Prostate gland (tissue), 2 donors: ENCODE measurements at regions of chr5 and their contacts with region 1.

Region 1: GRCh38 chr5:170434966-170435605 is 45.9 kb upstream of the KCNMB1 start:
- DNase-seq: peak; percentile 37
- H3K4me3 ChIP-seq: no peak overlapping the region
- H3K27ac ChIP-seq: no peak overlapping the region
- H3K4me1 ChIP-seq: no peaks in the 10 kb centered on the region
- H3K27me3 ChIP-seq: no peaks in the 10 kb centered on the region
- CTCF ChIP-seq: peak; percentile 94 to 95 (median 94)
- POLR2A ChIP-seq: no peak

Region 2: DNA sequence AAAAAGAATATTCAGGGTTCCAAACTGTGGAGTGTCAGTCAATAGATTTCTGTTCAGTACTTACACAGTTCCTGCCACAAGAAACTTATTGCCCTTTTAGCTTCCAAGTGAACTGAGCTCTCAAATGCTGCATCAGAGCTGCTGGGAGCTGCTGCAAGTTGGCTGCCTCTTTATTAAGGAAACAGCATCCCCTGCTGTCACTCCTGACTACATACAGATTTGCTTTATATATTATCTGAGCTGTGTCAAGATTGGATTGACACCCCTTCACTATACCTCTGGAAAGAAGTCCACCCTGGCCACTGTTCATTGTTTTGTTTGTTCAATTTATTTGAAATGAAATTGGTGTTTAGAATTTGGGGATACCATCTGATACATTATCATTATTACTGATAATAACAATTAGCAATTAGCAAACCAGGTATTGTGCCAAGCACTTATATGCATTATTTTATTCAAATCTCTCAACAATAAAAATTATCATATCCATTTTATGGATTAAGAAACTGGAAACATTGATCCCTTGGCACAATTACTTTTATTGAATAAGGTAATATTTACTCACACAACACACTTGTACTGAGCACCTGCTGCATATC is 218.7 kb before region 1 on chr5:
- intact Hi-C with region 1: no loop called
- DNase-seq: no peak
- H3K4me3 ChIP-seq: no peak overlapping the region
- H3K27ac ChIP-seq: no peak overlapping the region
- H3K4me1 ChIP-seq: no peaks in the 10 kb centered on the region
- H3K27me3 ChIP-seq: no peaks in the 10 kb centered on the region
- CTCF ChIP-seq: peak in 2 of 4 experiments; percentile 45 to 48
- POLR2A ChIP-seq: no peak

Region 3: GRCh38 chr5:170552621-170553115 is 117.6 kb after region 1 on chr5:
- intact Hi-C with region 1: loop called (anchors 10 kb)
- DNase-seq: no peak
- H3K4me3 ChIP-seq: no peak overlapping the region
- H3K27ac ChIP-seq: no peak overlapping the region
- H3K4me1 ChIP-seq: no peaks in the 10 kb centered on the region
- H3K27me3 ChIP-seq: no peaks in the 10 kb centered on the region
- CTCF ChIP-seq: no peak
- POLR2A ChIP-seq: no peak

Region 4: DNA sequence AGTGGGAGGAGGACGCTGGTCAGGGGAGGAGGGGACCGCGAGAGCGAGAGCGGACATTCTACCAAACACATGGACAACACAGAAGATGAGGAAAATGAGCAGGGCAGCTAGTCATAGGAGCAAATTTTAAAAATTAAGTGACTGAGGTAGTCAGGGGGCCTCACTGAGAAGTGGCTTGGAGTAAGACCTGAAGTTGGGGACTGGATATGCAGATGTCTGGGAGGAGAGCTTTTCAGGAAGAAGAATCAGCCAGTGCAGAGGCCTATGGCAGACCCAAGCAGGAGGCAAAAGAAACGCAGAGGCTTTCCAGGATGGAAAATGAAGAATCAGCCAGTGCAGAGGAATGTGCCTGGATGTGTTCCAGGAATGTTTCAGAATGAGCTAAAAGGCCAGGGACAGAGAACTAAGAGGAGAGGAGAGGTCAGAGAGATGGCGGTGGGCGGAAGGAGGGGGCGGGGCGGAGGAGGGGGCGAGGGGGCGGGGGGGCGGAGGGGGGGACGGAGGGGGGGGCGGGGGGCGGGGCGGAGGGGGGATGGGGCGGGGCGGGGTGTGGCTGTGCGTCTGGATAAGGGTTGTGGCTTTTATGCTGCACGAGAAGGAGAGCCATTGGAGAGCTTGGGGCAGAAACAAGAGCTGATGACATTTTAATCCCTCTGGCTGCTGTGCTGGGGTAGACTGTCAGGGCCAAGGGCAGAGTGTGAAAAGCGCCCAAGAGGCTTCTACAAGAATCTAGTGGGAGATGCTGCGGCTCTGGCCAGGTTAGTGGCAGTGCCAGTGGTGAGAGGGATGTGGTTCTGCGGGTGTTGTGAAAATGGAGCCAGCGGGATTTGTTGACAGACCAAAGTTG is 198.4 kb after region 1 on chr5:
- intact Hi-C with region 1: loop called (anchors 2 kb)
- DNase-seq: peak; percentile 67
- H3K4me3 ChIP-seq: peak overlapping the region in 1 of 2 donors; percentile 2
- H3K27ac ChIP-seq: peak overlapping the region; percentile 46 to 55
- H3K4me1 ChIP-seq: no peaks in the 10 kb centered on the region
- H3K27me3 ChIP-seq: no peaks in the 10 kb centered on the region
- CTCF ChIP-seq: peak in 1 of 4 experiments; percentile 9
- POLR2A ChIP-seq: no peak